RWPE1 (cell line): ENCODE measurements at regions of chr6 and their contacts with region 1.

Region 1: GRCh38 chr6:6676910-6677441 is 88.5 kb downstream of the LY86 start:
- DNase-seq: peak; percentile 72
- H3K27ac ChIP-seq: peak overlapping the region; percentile 58
- CTCF ChIP-seq: peak; percentile 94

Region 2: GRCh38 chr6:6616656-6617055 is 60.3 kb before region 1 on chr6:
- CTCF ChIA-PET with region 1: no interaction called
- POLR2A ChIA-PET with region 1: no interaction called
- DNase-seq: no peak
- H3K27ac ChIP-seq: no peak overlapping the region
- CTCF ChIP-seq: no peak

Region 3: GRCh38 chr6:6724539-6725467 is 47.8 kb after region 1 on chr6:
- CTCF ChIA-PET with region 1: interaction called, 11 read pairs
- POLR2A ChIA-PET with region 1: no interaction called
- DNase-seq: peak; percentile 67
- H3K27ac ChIP-seq: peak overlapping the region; percentile 65
- CTCF ChIP-seq: peak; percentile 83